ENCODE measurements at regions of chr6 and their contacts with region 1.

Region 1: GRCh38 chr6:41779793-41780545 is at the start of gene FRS3:
- DNase-seq: peak; percentile 90
- ATAC-seq: peak; percentile 91
- H3K4me3 ChIP-seq: peak within 1 kb of the TSS; percentile 77 to 83
- H3K27ac ChIP-seq: peak within 1 kb of the TSS; percentile 69
- H3K4me1 ChIP-seq: peaks cover 14 to 23% of the 10 kb centered on the region in 2 experiments
- H3K27me3 ChIP-seq: no peaks in the 10 kb centered on the region
- CTCF ChIP-seq: peak in 2 of 3 experiments; percentile 86 to 90; a peak in 4 of 6 replicates
- POLR2A ChIP-seq: no peak
- RAD21 ChIP-seq: no peak
- total RNA-seq, gene FRS3: 5.9 TPM

Region 2: DNA sequence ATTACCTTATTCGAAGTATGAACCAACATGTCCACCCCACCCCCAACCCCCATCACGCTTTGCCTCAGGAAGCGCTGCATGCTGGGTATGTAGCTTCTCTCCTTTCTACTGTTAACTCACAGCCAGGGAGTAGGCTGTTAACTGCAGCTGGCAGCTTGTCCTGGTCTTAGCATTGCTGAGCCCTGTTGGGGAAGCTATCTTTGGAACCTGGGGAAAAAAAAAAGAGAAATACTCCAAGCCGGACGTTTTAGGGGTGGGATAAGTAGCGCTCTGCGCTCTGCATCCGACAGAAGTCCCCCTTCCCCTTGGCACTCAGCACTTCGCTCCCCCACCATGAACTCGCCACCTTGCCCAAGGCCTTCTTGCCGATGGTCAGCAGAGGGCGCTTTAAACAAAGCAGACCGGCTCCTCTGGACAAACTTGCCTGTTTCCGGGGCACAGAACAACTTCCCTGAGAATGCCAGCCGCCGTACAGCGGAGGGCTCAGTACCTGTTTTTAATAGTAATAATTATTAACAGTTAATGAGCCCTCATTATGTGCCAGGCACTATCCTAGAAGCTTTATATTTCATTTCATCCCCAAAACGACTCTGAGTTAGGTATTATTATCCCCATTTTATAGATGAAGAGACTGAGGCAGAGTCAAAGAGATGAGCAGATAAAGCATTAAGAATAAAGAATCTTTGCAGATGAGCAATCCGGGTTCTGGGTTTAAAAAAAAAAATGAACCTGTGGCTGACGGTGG is 176.9 kb before region 1 on chr6:
- CTCF ChIA-PET with region 1: no interaction called
- POLR2A ChIA-PET with region 1: no interaction called
- RAD21 ChIA-PET with region 1: no interaction called
- intact Hi-C with region 1: loop called (anchors 10 kb)
- DNase-seq: peak; percentile 81
- ATAC-seq: peak; percentile 82
- H3K4me3 ChIP-seq: peak overlapping the region; percentile 6 to 40
- H3K27ac ChIP-seq: no peak overlapping the region
- H3K4me1 ChIP-seq: peaks cover 3 to 12% of the 10 kb centered on the region in 2 experiments; a peak in 3 of 4 replicates
- H3K27me3 ChIP-seq: no peaks in the 10 kb centered on the region
- CTCF ChIP-seq: peak; percentile 86 to 98 (median 90)
- POLR2A ChIP-seq: peak; percentile 42
- RAD21 ChIP-seq: peak; percentile 96

Region 3: GRCh38 chr6:41705996-41706835 is 73.8 kb before region 1 on chr6:
- CTCF ChIA-PET with region 1: interaction called, 4 read pairs
- POLR2A ChIA-PET with region 1: no interaction called
- RAD21 ChIA-PET with region 1: no interaction called
- intact Hi-C with region 1: loop called (anchors 1 kb)
- DNase-seq: no peak
- ATAC-seq: peak; percentile 97
- H3K4me3 ChIP-seq: no peak overlapping the region
- H3K27ac ChIP-seq: peak overlapping the region; percentile 40
- H3K4me1 ChIP-seq: peaks cover 0 to 14% of the 10 kb centered on the region in 2 experiments; a peak in 3 of 4 replicates
- H3K27me3 ChIP-seq: no peaks in the 10 kb centered on the region
- CTCF ChIP-seq: peak; percentile 84 to 93 (median 90)
- POLR2A ChIP-seq: no peak
- RAD21 ChIP-seq: peak; percentile 83

Region 4: DNA sequence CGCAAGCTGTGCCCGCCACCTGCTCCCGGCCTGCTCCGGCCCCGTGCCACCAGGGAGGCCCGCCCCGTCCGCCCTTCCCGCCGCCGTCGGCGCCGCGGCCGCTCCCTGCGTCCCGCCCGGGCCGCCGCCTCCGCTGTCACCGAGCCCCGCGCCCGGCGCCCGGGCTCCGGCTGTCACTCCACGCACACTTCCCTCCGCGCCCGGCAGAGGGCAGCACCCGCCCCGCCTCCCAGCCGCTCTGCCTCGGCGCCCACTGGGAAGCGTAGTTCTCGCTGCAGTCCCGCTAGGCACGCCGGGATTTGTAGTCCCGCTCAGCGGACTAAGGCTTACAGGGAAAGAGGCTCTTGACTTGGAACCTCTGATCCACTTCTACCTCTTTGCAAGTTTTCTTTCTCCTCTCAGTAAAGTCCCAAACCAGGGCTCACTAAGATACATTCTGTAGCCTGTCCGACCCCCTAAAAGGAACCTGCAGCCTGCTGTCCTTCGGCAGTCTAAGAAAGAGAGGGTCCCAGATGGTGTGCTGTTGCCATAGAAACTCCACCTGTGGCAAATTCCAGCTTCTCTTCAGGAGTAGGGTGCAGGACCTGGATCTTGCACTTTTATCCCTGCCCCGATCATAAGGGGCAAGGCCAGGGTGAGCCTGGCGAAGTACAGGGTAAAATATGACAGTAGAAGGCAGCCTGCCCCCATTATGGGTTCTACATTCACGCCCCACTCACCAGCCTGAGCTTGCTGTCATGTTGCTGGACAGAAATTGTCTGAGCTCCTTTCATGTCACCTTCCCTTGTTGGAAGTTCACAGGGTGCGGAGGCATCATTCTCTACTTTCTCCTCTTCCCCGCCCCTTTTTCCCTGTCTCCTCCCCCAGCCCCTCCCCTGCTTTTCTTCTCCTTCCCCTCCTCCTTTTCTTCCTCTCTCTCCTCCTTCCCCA is 44.3 kb before region 1 on chr6 and contains the start of gene TFEB:
- CTCF ChIA-PET with region 1: interaction called, 5 read pairs
- POLR2A ChIA-PET with region 1: no interaction called
- RAD21 ChIA-PET with region 1: no interaction called
- intact Hi-C with region 1: loop called (anchors 2 kb)
- DNase-seq: peak; percentile 73
- ATAC-seq: peak; percentile 71
- H3K4me3 ChIP-seq: peak within 1 kb of the TSS; percentile 58 to 76
- H3K27ac ChIP-seq: peak within 1 kb of the TSS; percentile 75; the same call in 1 of the 2 replicates
- H3K4me1 ChIP-seq: peaks cover 13 to 26% of the 10 kb centered on the region in 2 experiments
- H3K27me3 ChIP-seq: no peaks in the 10 kb centered on the region
- CTCF ChIP-seq: peak; percentile 68 to 89 (median 77)
- POLR2A ChIP-seq: no peak
- RAD21 ChIP-seq: peak; percentile 63
- total RNA-seq, gene TFEB: 4.8 TPM